A673 (cell line): ENCODE measurements at regions of chr6 and their contacts with region 1.

Region 1: DNA sequence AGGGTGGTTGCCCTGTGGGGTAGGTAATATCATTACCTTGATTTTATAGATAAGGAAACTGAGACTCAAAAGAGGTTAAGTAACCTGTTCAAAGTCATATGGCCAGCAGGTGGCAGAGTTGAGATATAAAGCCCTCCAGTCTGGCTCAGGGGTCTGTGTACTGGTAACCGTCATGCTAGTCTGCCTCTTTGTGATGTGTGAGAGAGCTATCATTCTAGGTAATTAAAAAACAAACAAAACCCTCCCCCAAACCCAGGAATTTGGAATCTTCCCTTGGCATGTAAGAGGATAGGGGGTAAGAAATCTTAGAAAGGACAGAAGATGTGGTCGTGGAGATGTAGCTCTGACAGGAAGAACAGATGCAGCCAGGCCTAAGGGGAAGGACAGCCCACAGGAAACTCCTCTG is 206.0 kb downstream of the CDC5L start:
- DNase-seq: peak; percentile 79
- H3K4me3 ChIP-seq: no peak overlapping the region
- H3K27ac ChIP-seq: no peak overlapping the region
- H3K4me1 ChIP-seq: no peaks in the 10 kb centered on the region
- H3K27me3 ChIP-seq: no peaks in the 10 kb centered on the region
- CTCF ChIP-seq: peak; percentile 76

Region 2: GRCh38 chr6:45049188-45049843 is 455.8 kb after region 1 on chr6:
- CTCF ChIA-PET with region 1: interaction called, 10 read pairs
- POLR2A ChIA-PET with region 1: no interaction called
- intact Hi-C with region 1: no loop called
- DNase-seq: peak; percentile 7
- H3K4me3 ChIP-seq: no peak overlapping the region
- H3K27ac ChIP-seq: no peak overlapping the region
- H3K4me1 ChIP-seq: no peaks in the 10 kb centered on the region
- H3K27me3 ChIP-seq: no peaks in the 10 kb centered on the region
- CTCF ChIP-seq: no peak

Region 3: DNA sequence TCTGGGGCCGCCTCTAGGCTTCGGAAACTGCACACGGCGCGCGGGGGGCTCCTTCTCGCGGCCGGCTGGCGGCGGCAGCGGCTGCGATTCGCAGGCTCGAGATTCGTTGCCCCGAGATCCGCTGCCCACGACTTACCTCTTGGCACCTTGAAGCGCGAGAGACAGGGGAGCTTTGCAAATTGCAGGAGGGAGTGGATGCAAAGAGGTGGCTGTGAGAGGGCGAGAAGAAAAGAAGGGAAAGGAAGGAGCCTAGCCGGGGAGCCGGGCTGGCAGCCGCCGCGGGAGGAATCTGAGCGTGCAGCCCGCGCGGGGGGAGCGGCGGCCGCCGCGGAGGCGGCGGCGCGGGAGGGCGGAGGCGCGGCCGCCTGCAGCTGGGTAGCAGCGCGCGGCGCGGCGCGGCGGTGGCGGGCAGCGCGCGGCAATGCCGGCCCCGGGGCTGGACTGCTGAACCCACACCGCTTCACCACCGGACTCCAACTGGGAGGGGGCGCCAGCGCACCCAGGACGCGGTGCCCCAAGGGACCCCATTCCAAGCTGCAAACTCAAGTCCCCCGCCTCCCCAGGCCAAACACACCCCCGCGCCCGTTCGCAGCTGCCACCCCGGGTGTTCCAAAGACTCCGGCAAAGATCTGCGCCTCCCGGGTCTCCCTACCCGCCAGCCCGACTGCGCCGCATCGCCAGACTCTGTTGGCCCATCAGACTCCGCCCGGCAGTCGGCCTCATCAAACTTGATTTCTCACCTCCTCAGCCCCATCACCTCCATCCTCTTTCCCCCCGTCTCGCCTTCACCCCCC is 828.4 kb after region 1 on chr6:
- CTCF ChIA-PET with region 1: interaction called, 3 read pairs
- POLR2A ChIA-PET with region 1: interaction called, 11 read pairs
- intact Hi-C with region 1: no loop called
- DNase-seq: peak; percentile 72
- H3K4me3 ChIP-seq: peak overlapping the region; percentile 86
- H3K27ac ChIP-seq: peak overlapping the region; percentile 49
- H3K4me1 ChIP-seq: peaks cover 13% of the 10 kb centered on the region
- H3K27me3 ChIP-seq: peaks cover 11% of the 10 kb centered on the region
- CTCF ChIP-seq: peak; percentile 55

Region 4: GRCh38 chr6:45714741-45715507 is 1121.4 kb after region 1 on chr6:
- CTCF ChIA-PET with region 1: interaction called, 6 read pairs
- POLR2A ChIA-PET with region 1: no interaction called
- intact Hi-C with region 1: loop called (anchors 1 kb)
- DNase-seq: peak; percentile 87
- H3K4me3 ChIP-seq: no peak overlapping the region
- H3K27ac ChIP-seq: no peak overlapping the region
- H3K4me1 ChIP-seq: peaks cover 5% of the 10 kb centered on the region
- H3K27me3 ChIP-seq: no peaks in the 10 kb centered on the region
- CTCF ChIP-seq: peak; percentile 84

Region 5: DNA sequence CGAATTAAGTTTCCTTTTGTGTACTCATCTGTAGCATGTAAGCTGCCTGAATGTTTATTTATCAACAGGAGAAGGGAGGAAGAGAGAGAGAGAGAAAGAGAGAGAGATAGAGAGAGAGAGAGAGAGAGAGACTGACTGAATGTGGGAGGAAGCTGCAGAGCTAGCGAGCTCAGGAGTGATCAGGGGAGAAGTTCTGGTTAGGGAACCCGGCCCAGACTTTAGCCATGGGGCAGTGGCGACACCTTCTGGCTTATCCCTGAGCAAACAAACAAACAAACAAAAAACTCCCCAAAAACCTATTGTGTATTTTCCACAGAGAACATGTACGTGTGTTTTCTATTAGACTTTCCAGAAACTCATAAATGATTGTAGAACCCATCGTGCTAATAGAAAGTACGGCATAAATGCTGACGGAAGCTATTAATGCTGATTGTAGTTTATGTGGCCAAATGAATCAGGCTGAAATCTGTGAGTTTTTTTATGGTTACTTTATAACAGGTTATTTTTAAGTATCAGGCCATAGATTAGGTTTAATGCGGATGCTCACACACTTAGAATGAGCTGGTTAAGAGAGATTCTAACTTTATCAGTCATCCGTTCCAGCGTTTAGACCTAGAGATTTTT is 1329.3 kb after region 1 on chr6:
- CTCF ChIA-PET with region 1: interaction called, 4 read pairs
- POLR2A ChIA-PET with region 1: no interaction called
- intact Hi-C with region 1: loop called (anchors 2 kb)
- DNase-seq: peak; percentile 66
- H3K4me3 ChIP-seq: no peak overlapping the region
- H3K27ac ChIP-seq: no peak overlapping the region
- H3K4me1 ChIP-seq: no peaks in the 10 kb centered on the region
- H3K27me3 ChIP-seq: no peaks in the 10 kb centered on the region
- CTCF ChIP-seq: peak; percentile 76